ENCODE measurements at regions of chr5 and their contacts with region 1.

Region 1: DNA sequence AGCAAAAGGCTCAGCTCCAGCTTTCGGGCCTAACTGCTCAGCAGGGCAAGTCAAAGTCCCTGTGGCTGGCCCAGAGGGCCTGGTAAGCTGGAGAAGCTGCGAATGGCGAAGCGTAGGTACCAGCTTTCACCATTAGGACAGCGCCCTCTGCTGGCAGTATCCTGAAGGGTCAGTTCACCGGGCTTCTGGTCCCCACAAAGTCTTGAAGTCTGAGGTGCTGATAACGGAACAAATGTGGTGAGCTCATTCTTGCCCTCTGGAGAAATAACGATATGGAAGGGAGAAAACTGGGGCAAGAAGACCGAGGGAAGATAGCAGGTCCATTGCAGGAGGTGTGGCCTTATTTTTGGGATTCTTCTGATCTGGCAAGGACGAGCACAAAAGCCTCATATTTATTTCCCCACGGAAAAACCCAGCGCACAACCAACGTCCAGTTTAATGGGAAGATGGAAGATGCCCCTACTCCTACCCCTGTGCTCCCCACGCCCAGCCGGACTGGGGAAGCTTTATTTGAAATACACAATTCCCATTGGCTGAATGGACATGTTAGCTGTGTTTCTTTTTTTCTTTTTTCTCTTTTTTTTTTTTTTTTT is 7.2 kb downstream of the SOWAHA start:
- DNase-seq: peak; percentile 92 to 99 (median 96)
- H3K4me3 ChIP-seq: peak overlapping the region in 54 of 59 donors; percentile 0 to 59 (median 41)
- H3K27ac ChIP-seq: peak overlapping the region; percentile 81 to 100 (median 97)
- H3K27me3 ChIP-seq: no peaks in the 10 kb centered on the region
- CTCF ChIP-seq: peak; percentile 86 to 99 (median 95)

Region 2: DNA sequence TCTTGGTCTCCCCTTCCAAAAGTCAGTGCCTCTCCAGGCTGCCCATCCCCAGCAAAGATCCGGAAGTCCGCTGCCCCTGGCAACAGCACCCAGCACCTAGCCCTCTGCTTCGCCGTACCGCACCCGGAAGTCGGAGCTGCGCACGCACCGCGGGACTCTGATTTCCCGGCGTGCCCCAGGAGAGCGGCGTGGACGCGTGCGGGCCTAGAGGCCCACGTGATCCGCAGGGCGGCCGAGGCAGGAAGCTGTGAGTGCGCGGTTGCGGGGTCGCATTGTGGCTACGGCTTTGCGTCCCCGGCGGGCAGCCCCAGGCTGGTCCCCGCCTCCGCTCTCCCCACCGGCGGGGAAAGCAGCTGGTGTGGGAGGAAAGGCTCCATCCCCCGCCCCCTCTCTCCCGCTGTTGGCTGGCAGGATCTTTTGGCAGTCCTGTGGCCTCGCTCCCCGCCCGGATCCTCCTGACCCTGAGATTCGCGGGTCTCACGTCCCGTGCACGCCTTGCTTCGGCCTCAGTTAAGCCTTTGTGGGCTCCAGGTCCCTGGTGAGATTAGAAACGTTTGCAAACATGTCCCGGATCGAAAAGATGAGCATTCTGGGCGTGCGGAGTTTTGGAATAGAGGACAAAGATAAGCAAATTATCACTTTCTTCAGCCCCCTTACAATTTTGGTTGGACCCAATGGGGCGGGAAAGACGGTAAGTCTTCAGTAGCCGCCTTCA is 263.3 kb before region 1 on chr5 and contains the start of gene RAD50:
- intact Hi-C with region 1: loop called in 1 of 2 experiments (anchors 10 kb)
- DNase-seq: peak; percentile 82 to 94 (median 88)
- H3K4me3 ChIP-seq: peak within 1 kb of the TSS; percentile 41 to 97 (median 86)
- H3K27ac ChIP-seq: peak within 1 kb of the TSS; percentile 9 to 95 (median 82)
- H3K27me3 ChIP-seq: no peaks in the 10 kb centered on the region
- CTCF ChIP-seq: peak in 28 of 56 donors; percentile 5 to 50 (median 25)
- total RNA-seq, gene RAD50: 35.0 to 63.2 (median 46.2) TPM

Region 3: GRCh38 chr5:132655821-132656773 is 164.2 kb before region 1 on chr5:
- intact Hi-C with region 1: loop called (anchors 5 to 10 kb)
- DNase-seq: peak in 3 of 10 donors; percentile 40 to 68 (median 48)
- H3K4me3 ChIP-seq: peak overlapping the region; percentile 25 to 73 (median 60)
- H3K27ac ChIP-seq: peak overlapping the region in 20 of 59 donors; percentile 2 to 84 (median 38)
- H3K27me3 ChIP-seq: peaks cover 0 to 11% (median 0%) of the 10 kb centered on the region in 45 donors
- CTCF ChIP-seq: peak in 40 of 56 donors; percentile 9 to 59 (median 30)

Region 4: DNA sequence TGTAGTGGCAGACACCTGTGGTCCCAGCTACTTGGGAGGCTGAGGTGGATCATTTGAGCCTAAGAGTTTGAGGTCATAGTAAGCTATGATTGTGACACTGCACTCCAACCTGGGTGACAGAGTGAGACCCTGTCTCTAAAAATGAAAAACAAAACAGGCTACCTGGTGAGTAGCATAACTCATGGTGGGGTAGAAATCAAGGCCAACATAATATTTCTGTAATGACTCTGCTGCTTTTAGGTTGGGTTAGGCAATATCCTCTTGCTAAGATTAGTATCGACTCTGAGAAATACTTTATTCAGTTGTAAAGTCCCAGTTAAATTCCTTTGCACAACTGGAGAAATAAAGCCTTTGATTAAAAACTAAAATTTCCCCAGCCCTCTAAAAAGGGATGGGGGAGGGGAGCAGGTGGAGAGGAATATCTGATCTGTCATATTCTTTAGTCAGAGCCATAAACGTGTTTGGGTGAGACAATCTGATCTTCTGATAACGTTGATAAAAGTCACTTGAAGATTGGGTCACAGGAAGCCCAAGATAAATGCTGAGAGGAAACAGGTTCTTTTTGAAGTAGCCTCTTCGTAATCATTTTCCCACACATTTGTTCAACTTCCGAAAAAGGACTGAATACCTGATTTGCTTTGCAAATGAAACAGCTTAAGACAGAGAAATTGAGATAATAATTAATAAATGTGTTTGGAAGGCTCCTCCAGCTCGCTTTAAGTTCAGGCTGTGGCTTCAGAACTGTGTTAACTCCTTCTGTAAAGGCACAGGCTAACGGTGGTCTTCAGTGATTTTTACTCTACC is 131.5 kb before region 1 on chr5:
- intact Hi-C with region 1: no loop called
- DNase-seq: no peak
- H3K4me3 ChIP-seq: no peak overlapping the region
- H3K27ac ChIP-seq: no peak overlapping the region
- H3K27me3 ChIP-seq: no peaks in the 10 kb centered on the region
- CTCF ChIP-seq: no peak

Region 5: DNA sequence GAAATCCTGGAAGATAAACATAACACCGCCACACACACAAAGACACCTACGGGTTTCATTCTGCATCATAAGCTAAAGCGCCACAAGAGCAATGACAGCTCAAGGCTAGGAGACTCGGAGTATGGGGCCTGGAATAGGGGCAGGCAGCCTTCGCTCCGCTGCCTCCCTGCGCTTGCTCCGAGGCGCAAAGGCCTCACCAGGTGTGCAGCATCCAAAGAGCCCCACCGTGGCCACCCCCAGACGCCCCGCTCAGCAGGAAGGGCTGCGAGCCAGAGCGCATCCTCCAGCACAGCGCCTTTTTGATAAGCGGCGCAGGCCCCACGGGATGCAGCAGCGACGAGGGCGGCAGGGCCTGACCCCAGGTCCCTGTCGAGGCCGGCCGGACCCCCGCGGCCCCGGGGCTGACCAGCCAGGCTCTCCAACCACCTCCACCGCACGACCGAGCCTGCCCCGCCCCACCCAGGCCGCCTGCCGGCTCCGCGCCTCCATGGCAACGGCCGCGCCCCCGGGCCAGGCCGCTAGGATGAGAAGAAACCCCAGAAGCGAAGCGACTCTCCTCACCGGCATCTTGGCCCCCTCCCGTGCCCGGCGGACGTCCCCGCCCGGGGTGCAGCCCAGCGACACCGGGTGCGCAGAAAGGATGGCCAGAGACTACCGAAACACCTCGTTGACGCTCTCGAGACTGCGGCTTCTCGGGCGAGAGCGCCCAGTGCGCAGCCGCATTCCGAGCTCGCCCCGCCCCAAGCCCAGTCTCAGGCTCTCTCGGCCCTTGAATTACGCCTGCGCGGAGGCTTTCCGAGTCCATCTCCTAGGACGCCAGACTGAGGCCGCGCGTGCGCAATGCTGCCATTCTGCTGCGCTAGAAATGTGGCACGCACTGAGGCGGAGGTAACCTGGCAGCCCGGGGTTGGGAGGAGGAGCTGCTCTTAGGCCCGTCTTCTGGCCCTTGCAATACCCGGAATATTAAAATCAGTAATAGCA is 83.1 kb before region 1 on chr5 and contains the start of gene KIF3A:
- intact Hi-C with region 1: loop called (anchors 5 kb)
- DNase-seq: peak; percentile 94 to 98 (median 96)
- H3K4me3 ChIP-seq: peak within 1 kb of the TSS; percentile 57 to 99 (median 91)
- H3K27ac ChIP-seq: peak within 1 kb of the TSS in 58 of 59 donors; percentile 6 to 93 (median 84)
- H3K27me3 ChIP-seq: no peaks in the 10 kb centered on the region
- CTCF ChIP-seq: peak in 47 of 56 donors; percentile 6 to 63 (median 39)
- total RNA-seq, gene KIF3A: 58.5 to 177 (median 126) TPM

Region 6: DNA sequence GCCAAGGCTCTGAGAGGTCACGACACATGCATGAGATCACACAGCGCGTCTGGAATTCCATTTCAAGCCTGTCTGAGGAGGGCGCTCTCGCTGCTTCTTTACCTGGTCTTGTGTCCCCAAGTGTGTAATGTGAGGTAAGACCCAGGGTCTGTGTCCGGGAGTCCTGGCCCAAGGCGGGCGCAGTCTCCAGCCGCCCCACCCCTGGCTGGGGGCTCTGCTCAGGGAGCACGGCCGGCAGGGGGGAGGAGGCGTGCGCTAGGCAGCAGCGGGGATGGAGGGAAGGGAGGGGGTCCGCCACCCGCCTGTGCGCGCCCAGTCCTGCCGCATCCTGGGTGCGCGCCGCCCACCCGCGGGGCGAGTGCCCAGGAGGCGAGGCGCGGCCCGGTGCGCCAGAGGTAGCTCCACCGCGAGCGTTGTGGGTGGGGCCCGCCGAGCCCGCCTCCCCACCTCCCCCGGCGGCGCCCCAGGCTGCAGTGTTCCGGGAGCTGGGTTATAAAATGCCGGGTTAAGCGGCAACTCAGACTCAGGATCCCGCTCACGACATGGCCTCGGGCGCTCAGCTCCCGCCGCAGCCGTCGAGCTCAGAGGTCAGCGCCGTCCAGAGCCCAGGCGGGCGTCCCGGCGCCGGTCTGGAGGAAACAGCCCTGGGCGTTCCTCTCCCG is 73.2 kb before region 1 on chr5 and contains the start of gene CCNI2:
- intact Hi-C with region 1: loop called (anchors 1 to 5 kb)
- DNase-seq: peak in 2 of 10 donors; percentile 66 to 73
- H3K4me3 ChIP-seq: peak within 1 kb of the TSS; percentile 33 to 79 (median 64)
- H3K27ac ChIP-seq: peak within 1 kb of the TSS in 58 of 59 donors; percentile 8 to 89 (median 73)
- H3K27me3 ChIP-seq: no peaks in the 10 kb centered on the region
- CTCF ChIP-seq: peak in 52 of 56 donors; percentile 9 to 67 (median 43)
- total RNA-seq, gene CCNI2: 0.26 to 4.5 (median 1.5) TPM in 119 of 120 experiments, not detected in the other

Region 7: DNA sequence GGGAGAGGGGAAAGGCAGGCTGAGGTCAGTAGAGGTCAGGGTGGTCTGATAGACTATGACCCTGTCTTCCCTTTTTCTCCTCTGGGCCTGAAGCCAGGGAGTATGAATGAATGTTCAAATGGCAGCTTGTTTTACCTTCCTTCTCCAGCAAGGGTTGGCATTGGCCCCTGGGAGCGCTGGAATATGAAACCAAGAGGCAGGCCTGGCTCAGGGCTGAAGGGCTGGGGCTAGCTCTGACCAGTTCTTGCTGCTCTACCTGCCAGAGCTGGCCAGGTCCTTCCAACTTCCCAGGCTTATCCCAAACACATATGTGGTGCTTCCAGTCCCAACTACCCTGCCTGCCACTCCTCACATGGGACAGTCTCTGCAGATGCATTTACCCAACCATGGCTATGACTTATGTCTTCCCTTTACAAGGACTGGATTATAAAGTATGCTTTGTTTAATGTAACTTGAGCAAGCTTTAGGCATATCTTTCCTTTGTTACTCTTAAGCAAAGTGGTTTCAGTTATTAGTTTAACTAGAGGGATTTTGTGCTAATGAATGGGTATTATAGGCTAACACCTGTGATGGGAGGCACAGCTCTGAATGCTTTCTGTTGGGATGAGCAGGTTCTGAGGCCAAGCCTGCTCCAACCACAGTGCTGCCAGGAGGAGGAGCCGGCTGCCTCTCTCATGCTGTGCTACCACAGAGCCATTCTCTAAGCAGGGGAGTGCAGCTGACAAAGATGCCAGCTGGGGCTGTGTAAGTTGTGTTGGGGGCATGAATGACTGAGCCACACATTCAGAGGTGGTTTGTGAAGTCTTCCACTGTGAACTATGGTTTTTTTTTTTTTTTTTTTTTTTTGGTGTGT is 66.9 kb before region 1 on chr5:
- intact Hi-C with region 1: loop called (anchors 1 to 5 kb)
- DNase-seq: peak in 9 of 10 donors; percentile 67 to 87 (median 81)
- H3K4me3 ChIP-seq: no peak overlapping the region
- H3K27ac ChIP-seq: peak overlapping the region in 58 of 59 donors; percentile 27 to 94 (median 82)
- H3K27me3 ChIP-seq: no peaks in the 10 kb centered on the region
- CTCF ChIP-seq: peak in 50 of 56 donors; percentile 22 to 71 (median 48)

Region 8: DNA sequence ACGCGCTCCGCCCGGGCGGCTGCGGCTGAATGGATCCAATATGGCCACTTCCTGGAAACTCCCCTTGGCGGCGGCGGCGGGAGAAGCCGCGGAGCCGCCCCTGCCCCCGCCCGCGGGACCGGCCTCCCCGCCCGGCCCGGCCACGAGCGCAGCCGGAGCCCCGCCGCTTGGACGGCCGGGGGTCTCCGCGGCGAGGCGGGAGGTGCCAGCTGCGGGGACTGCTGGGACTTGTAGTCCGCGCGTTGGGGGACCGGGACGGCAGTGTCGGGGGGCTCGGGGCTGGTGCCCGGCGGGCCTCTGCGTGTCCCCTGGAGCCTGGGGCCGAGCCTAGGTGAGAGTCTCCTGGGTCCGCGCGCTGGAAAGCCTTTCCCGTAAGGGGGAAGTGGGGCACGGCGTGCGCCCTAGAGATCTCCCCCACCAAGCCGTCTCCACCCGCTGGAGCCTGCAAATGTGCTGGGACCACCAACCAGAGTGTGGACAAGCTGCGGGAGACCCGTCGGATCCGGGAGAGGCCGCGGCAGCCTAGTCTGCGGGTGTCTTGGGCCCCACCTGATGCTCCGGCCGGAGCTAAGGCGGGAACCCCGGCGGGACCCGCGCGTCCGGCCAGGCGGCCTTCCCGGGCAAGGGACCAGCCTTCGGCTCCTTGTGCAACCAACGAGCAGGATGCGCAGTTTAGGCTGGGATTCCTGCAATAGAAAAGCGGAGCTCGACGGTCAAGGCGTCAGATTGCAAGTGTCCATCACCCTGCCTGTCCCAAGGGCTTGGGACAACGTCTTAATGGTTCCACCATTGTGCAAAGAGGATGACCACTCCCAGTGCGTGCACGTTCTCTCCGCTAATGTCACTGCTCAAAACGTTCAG is 42.8 kb before region 1 on chr5 and contains the start of gene SEPTIN8:
- intact Hi-C with region 1: loop called in 1 of 2 experiments (anchors 2 kb)
- DNase-seq: peak in 7 of 10 donors; percentile 50 to 85 (median 67)
- H3K4me3 ChIP-seq: peak within 1 kb of the TSS; percentile 64 to 97 (median 87)
- H3K27ac ChIP-seq: peak within 1 kb of the TSS; percentile 91 to 100 (median 98)
- H3K27me3 ChIP-seq: no peaks in the 10 kb centered on the region
- CTCF ChIP-seq: peak in 5 of 56 donors; percentile 6 to 35 (median 16)
- total RNA-seq, gene SEPTIN8: 221 to 622 (median 319) TPM

Region 9: GRCh38 chr5:133398646-133399101 is 578.4 kb after region 1 on chr5:
- intact Hi-C with region 1: no loop called
- DNase-seq: peak in 1 of 10 donors; percentile 25
- H3K4me3 ChIP-seq: no peak overlapping the region
- H3K27ac ChIP-seq: peak overlapping the region in 18 of 59 donors; percentile 1 to 81 (median 38)
- H3K27me3 ChIP-seq: no peaks in the 10 kb centered on the region
- CTCF ChIP-seq: no peak

Measured in dorsolateral prefrontal cortex (tissue), 120 donors.